Mammary epithelial cell (primary cell): ENCODE measurements at regions of chr19 and their contacts with region 1.

Region 1: DNA sequence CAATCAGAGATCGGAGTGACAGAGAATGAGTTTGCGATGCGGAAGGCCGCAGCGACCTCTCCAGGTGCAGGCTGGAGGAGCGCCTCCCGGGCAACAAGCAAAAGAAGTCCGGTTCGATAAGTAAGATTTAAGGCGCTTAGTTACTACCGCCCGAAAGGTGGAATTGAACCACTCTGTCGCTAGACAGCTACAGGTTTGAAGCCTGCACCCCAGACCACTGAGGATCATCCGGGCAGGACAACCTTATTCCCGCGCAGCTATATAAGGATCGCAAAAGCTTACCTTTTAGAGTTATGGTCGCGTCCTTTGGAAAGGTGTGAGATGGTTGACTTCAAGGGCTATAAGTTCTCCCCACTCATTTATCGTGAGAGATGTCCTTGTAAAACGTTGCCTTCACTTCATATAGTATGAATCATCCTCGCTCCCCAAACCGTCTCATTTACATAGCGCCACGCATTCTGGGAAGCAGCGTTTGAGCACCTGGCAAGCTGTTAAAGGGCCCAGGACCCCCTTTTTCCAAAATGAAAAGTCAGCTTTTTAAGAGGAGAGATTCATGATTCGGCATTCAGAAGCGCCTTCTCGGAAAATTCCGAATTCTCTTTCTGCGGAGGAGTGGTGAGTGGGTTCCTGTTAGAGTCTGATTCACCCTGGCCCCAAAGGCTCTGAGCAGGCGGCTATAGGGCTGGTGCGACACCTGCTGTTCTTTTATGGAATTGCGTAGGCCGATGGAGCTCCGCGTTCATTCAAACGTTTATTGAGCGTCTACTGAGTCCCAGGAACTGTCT is 10.8 kb downstream of the FOSB start:
- DNase-seq: peak; percentile 87
- H3K4me3 ChIP-seq: peak overlapping the region; percentile 47 to 58 (median 56)
- H3K27ac ChIP-seq: peak overlapping the region; percentile 99
- H3K4me1 ChIP-seq: peaks cover 5% of the 10 kb centered on the region
- H3K27me3 ChIP-seq: no peaks in the 10 kb centered on the region
- CTCF ChIP-seq: peak; percentile 96 to 98

Region 2: GRCh38 chr19:45187421-45188100 is 291.1 kb before region 1 on chr19:
- CTCF ChIA-PET with region 1: no interaction called
- dilution Hi-C with region 1: no loop called
- in situ Hi-C with region 1: loop called in 1 of 2 experiments (anchors 25 kb)
- intact Hi-C with region 1: loop called (anchors 1 kb)
- DNase-seq: no peak
- H3K4me3 ChIP-seq: no peak overlapping the region
- H3K27ac ChIP-seq: no peak overlapping the region
- H3K4me1 ChIP-seq: peaks cover 8% of the 10 kb centered on the region
- H3K27me3 ChIP-seq: no peaks in the 10 kb centered on the region
- CTCF ChIP-seq: peak; percentile 57 to 59

Region 3: DNA sequence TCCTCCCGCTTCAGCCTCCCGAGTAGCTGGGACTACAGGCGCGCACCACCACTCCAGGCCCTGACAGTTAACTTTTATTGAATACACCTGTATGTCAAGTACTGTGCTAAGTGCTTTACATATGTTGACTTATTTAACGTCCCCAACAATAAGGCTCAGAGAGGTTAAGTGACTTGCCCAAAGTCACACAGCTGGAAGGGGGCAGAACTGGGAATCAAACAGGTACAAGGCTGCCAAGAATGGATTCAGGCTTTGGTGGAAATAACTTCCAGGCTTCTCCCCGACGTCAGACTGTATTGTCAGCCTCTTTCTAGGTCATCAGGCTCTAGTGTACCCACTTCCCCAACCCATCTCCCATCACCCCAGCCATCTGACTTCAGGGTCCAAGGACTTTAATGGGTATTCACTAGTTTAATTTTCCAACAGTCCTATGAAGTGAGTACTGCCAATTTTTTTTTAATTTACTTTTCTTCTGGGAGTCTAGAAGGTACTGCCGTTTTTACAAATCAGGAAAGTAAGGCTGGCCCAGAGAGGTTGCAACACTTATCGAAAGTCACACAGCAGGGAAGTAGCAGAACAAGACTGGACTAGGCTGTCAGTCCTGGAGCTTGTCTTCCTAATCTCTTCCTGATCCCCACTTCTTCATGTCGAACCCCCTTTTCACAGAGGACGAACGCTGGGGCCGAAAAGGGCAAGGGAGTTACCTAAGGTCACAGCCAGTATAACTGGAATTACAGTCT is 151.1 kb before region 1 on chr19:
- CTCF ChIA-PET with region 1: no interaction called
- dilution Hi-C with region 1: loop called (anchors 5 kb)
- in situ Hi-C with region 1: no loop called
- intact Hi-C with region 1: no loop called
- DNase-seq: no peak
- H3K4me3 ChIP-seq: no peak overlapping the region
- H3K27ac ChIP-seq: no peak overlapping the region
- H3K4me1 ChIP-seq: no peaks in the 10 kb centered on the region
- H3K27me3 ChIP-seq: no peaks in the 10 kb centered on the region
- CTCF ChIP-seq: no peak

Region 4: GRCh38 chr19:45382426-45382825 is 96.2 kb before region 1 on chr19:
- CTCF ChIA-PET with region 1: no interaction called
- dilution Hi-C with region 1: loop called (anchors 5 kb)
- in situ Hi-C with region 1: no loop called
- intact Hi-C with region 1: no loop called
- DNase-seq: no peak
- H3K4me3 ChIP-seq: no peak overlapping the region
- H3K27ac ChIP-seq: no peak overlapping the region
- H3K4me1 ChIP-seq: no peaks in the 10 kb centered on the region
- H3K27me3 ChIP-seq: no peaks in the 10 kb centered on the region
- CTCF ChIP-seq: no peak

Region 5: GRCh38 chr19:45423589-45424190 is 55.0 kb before region 1 on chr19 and contains the start of gene ERCC1:
- CTCF ChIA-PET with region 1: no interaction called
- dilution Hi-C with region 1: no loop called
- in situ Hi-C with region 1: loop called in 1 of 2 experiments (anchors 10 kb)
- intact Hi-C with region 1: loop called (anchors 1 kb)
- DNase-seq: peak; percentile 99
- H3K4me3 ChIP-seq: peak within 1 kb of the TSS; percentile 50 to 95 (median 66)
- H3K27ac ChIP-seq: peak within 1 kb of the TSS; percentile 100
- H3K4me1 ChIP-seq: peaks cover 45% of the 10 kb centered on the region
- H3K27me3 ChIP-seq: no peaks in the 10 kb centered on the region
- CTCF ChIP-seq: no peak
- total RNA-seq, gene ERCC1: 81.9 to 316 TPM

Region 6: GRCh38 chr19:45496349-45496953 is 17.8 kb after region 1 on chr19:
- CTCF ChIA-PET with region 1: interaction called, 10 read pairs
- dilution Hi-C with region 1: no loop called
- in situ Hi-C with region 1: no loop called
- intact Hi-C with region 1: no loop called
- DNase-seq: no peak
- H3K4me3 ChIP-seq: peak overlapping the region; percentile 72 to 85 (median 77)
- H3K27ac ChIP-seq: no peak overlapping the region
- H3K4me1 ChIP-seq: peaks cover 23% of the 10 kb centered on the region
- H3K27me3 ChIP-seq: no peaks in the 10 kb centered on the region
- CTCF ChIP-seq: no peak

Region 7: GRCh38 chr19:45547976-45548609 is 69.4 kb after region 1 on chr19:
- CTCF ChIA-PET with region 1: no interaction called
- dilution Hi-C with region 1: no loop called
- in situ Hi-C with region 1: no loop called
- intact Hi-C with region 1: no loop called
- DNase-seq: peak; percentile 94
- H3K4me3 ChIP-seq: no peak overlapping the region
- H3K27ac ChIP-seq: peak overlapping the region; percentile 70
- H3K4me1 ChIP-seq: peaks cover 32% of the 10 kb centered on the region
- H3K27me3 ChIP-seq: no peaks in the 10 kb centered on the region
- CTCF ChIP-seq: no peak